Dendritic cell treated with granulocyte-macrophage colony-stimulating factor and Interleukin-4, amounts not matched to agents 40 ng/mL and 50 ng/mL, for 4 days (primary cell): ENCODE measurements at regions of chr10 and their contacts with region 1.

Region 1: DNA sequence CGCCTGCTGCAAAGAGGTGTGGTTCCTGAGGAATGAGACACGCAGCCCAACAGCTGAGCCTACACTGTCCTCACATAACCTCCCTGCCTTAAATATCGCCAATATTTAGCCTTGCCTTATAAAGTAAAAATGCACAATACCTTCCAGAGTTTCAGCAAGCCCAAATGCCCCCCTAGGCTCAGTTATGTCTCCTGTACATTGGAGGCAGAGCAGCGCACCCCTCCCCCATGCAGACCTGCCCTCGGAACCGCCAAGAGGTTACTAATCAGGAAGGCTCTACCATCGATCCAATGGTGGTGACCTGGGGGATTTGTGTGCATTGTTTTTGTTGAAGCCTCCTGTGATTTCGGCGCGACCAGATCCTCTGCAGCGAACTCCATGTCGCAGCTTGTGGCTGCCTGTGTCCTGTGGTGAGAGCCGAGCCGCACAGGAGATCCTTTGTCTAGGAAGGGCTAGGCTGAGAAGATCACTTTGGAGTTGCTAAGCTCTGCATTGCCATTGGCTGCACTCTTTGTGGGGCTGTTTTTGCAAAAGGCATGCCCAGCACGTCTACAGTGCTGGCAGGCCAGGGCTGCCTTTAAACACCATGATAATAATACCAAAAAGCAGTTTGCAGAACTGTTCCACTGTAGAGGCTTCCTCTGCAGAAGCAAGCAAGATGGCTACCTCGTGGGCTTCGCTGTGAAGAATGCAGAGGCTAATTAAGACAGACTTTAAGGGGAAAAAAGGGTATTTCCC is 40.1 kb downstream of the TET1 start:
- H3K4me3 Mint-ChIP-seq: peak overlapping the region; percentile 84
- H3K27ac Mint-ChIP-seq: peak overlapping the region; percentile 85
- H3K4me1 Mint-ChIP-seq: peaks cover 13% of the 10 kb centered on the region
- H3K27me3 Mint-ChIP-seq: peaks cover 15% of the 10 kb centered on the region

Region 2: DNA sequence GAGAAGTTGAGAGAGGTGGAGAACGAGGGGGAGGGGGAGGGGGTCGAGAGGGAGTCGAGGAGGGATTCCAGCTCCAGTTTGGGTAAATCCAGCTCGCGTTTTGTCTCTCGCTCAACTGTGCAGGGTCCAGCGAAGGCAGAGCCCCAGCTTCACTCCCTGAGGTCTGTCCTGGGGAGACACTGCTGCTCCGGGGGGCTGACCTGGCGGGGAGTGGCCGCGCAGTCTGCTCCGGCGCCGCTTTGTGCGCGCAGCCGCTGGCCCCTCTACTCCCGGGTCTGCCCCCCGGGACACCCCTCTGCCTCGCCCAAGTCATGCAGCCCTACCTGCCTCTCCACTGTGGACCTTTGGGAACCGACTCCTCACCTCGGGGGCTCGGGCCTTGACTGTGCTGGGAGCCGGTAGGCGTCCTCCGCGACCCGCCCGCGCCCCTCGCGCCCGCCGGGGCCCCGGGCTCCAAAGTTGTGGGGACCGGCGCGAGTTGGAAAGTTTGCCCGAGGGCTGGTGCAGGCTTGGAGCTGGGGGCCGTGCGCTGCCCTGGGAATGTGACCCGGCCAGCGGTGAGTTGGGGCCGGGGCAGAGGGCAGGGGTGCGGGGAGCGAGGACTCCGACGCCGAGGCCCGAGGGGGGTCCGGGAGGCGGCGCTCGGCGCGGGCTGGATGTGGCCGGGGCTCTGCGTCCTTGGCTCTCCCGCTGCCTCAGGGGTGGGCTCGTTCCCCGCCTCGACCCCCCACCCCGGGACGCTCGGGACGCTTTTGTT is 39.8 kb before region 1 on chr10 and contains the start of gene TET1:
- intact Hi-C with region 1: loop called (anchors 1 kb)
- H3K4me3 Mint-ChIP-seq: peak within 1 kb of the TSS; percentile 61
- H3K27ac Mint-ChIP-seq: no peak within 1 kb of the TSS
- H3K4me1 Mint-ChIP-seq: peaks cover 27% of the 10 kb centered on the region
- H3K27me3 Mint-ChIP-seq: peaks cover 88% of the 10 kb centered on the region